ENCODE measurements at regions of chr2 and their contacts with region 1.

Region 1: DNA sequence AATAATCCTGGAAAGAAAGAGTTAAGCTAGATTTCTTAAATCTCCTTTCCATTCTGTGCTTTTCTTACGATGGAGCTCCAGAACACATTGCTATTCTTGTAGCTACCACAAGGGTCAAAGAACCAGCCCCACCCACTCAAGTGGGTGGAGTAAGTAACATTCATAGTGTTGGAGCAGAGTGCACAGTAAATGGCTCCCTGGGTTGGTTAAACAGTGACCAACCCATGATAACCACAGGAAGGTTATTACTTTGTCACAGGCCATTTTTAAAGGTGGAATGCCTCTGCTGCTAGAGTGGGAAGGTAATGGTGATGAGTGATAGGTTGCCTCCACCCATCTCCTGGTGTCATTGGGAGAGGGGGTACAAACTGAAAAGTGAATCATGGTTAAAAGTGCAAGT is 13.9 kb downstream of the ARPC2 start:
- DNase-seq: peak; percentile 70
- ATAC-seq: peak; percentile 97
- H3K4me3 ChIP-seq: no peak overlapping the region
- H3K27ac ChIP-seq: no peak overlapping the region
- H3K4me1 ChIP-seq: peaks cover 39% of the 10 kb centered on the region
- H3K27me3 ChIP-seq: no peaks in the 10 kb centered on the region
- CTCF ChIP-seq: peak; percentile 26; the same call in 1 of the 2 replicates
- EP300 ChIP-seq: no peak
- POLR2A ChIP-seq: no peak
- RAD21 ChIP-seq: no peak

Region 2: GRCh38 chr2:218095853-218096252 is 135.0 kb before region 1 on chr2:
- CTCF ChIA-PET with region 1: no interaction called
- POLR2A ChIA-PET with region 1: no interaction called
- in situ Hi-C with region 1: no loop called
- intact Hi-C with region 1: no loop called
- DNase-seq: no peak
- ATAC-seq: no peak
- H3K4me3 ChIP-seq: no peak overlapping the region
- H3K27ac ChIP-seq: no peak overlapping the region
- H3K4me1 ChIP-seq: no peaks in the 10 kb centered on the region
- H3K27me3 ChIP-seq: peaks cover 2 to 3% of the 10 kb centered on the region in 2 experiments; a peak in 1 of 5 replicates
- CTCF ChIP-seq: no peak
- EP300 ChIP-seq: no peak
- POLR2A ChIP-seq: no peak
- RAD21 ChIP-seq: no peak

Region 3: DNA sequence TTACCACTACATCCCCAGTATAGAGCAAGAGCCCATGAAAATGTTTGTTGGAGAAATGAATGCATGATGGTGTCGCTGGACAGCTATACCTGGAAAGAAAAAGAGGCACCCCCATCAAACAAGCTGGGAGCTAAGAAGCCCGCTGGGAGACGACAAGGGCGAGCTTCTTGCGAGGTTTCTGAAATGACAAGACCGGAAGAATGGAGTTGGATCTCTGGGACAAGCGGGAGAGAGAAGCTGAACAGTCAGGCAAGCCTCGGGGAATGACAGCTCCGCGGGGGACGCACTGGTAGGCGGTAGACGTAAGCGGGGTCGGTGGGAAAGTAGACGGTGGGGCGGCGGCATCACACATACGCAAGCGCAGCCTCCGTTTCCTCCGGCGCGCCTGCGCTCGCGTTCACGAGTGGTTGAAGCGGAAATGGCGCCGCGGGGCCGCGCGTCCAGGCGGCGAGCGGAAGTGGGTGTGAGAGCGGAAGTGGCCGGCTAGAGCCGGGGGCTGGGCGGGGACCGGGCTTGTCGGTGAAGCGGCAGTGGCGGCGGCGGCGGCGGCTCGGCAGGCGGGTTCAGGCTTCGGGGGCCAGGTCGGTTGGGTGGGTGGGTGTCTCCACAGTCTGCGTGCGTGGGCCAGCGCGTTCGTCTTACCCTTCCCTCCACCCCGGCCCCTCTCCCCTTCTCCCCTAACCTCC is 14.1 kb before region 1 on chr2 and contains the start of gene ARPC2:
- CTCF ChIA-PET with region 1: no interaction called
- POLR2A ChIA-PET with region 1: interaction called, 11 read pairs
- in situ Hi-C with region 1: no loop called
- intact Hi-C with region 1: no loop called
- DNase-seq: peak; percentile 88
- ATAC-seq: peak; percentile 95
- H3K4me3 ChIP-seq: peak within 1 kb of the TSS; percentile 87 to 96 (median 93)
- H3K27ac ChIP-seq: peak within 1 kb of the TSS; percentile 70
- H3K4me1 ChIP-seq: peaks cover 46% of the 10 kb centered on the region
- H3K27me3 ChIP-seq: no peaks in the 10 kb centered on the region; a peak in 1 of 5 replicates
- CTCF ChIP-seq: peak; percentile 34
- EP300 ChIP-seq: peak in 1 of 2 experiments; percentile 40; a peak in 2 of 4 replicates
- POLR2A ChIP-seq: peak; percentile 81 to 90
- RAD21 ChIP-seq: peak; percentile 17; the same call in 1 of the 2 replicates
- total RNA-seq, gene ARPC2: 168 and 201 TPM in 2 replicates

Region 4: GRCh38 chr2:218252509-218253231 is 21.8 kb after region 1 on chr2:
- CTCF ChIA-PET with region 1: no interaction called
- POLR2A ChIA-PET with region 1: no interaction called
- in situ Hi-C with region 1: no loop called
- intact Hi-C with region 1: no loop called
- DNase-seq: no peak
- ATAC-seq: no peak
- H3K4me3 ChIP-seq: no peak overlapping the region
- H3K27ac ChIP-seq: no peak overlapping the region
- H3K4me1 ChIP-seq: no peaks in the 10 kb centered on the region
- H3K27me3 ChIP-seq: no peaks in the 10 kb centered on the region
- CTCF ChIP-seq: no peak
- EP300 ChIP-seq: no peak
- POLR2A ChIP-seq: no peak
- RAD21 ChIP-seq: no peak

Measured in HepG2 (cell line).